Mucosa of descending colon (tissue), 3 donors: ENCODE measurements at regions of chr13 and their contacts with region 1.

Region 1: DNA sequence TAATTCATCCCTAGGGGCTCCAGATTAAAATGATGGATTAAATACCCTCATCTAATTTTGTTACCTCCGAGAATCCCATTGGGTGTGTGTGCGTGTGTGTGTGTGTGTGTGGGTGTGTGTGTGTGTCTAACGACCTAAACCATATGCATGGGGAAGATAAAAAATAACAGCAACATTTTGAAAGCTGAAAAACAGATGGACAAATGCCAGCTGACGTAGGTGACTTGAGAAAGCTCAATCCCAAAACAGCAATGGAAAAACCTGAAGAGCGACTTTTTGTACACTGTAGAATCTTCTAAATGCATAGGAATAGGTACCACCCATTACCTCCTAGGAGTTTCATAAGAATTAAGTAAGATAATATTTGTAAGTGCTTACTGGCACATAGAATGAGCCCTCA is 8.7 kb upstream of the RPL21 start:
- DNase-seq: no peak
- ATAC-seq: no peak
- H3K4me3 ChIP-seq: no peak overlapping the region
- H3K4me1 ChIP-seq: no peaks in the 10 kb centered on the region
- CTCF ChIP-seq: no peak

Region 2: GRCh38 chr13:27171827-27172494 is 70.7 kb before region 1 on chr13:
- intact Hi-C with region 1: loop called in 1 of 2 experiments (anchors 10 kb)
- DNase-seq: peak; percentile 92 to 98 (median 97)
- ATAC-seq: peak; percentile 95
- H3K4me3 ChIP-seq: peak overlapping the region; percentile 62
- H3K4me1 ChIP-seq: peaks cover 32% of the 10 kb centered on the region
- CTCF ChIP-seq: no peak